ENCODE measurements at regions of chr21 and their contacts with region 1.

Region 1: GRCh38 chr21:15483138-15483780 is 246.5 kb upstream of the USP25 start:
- DNase-seq: peak; percentile 90
- ATAC-seq: peak; percentile 95
- H3K4me3 Mint-ChIP-seq: no peak overlapping the region
- H3K27ac Mint-ChIP-seq: no peak overlapping the region
- H3K4me1 Mint-ChIP-seq: peaks cover 21% of the 10 kb centered on the region
- H3K27me3 Mint-ChIP-seq: no peaks in the 10 kb centered on the region

Region 2: DNA sequence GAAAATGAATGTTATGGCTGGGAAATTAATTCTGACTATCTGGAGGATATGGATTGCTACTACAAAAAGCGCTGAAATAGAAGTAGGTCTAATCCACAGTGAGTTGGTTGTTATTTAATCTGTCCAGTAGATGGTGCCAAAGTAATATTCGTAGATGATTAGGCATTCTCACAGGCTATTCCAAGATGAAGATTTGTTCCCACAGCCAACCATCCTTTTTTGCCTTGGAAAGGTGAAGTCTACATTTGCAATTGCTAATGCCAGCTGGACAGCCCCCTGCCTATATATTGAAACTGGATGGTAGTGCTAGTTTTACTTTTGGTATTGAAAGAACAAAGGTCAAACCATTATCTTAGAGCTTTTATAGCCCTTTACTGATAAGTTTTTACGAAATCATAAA is 1223.5 kb before region 1 on chr21:
- CTCF ChIA-PET with region 1: interaction called, 4 read pairs
- POLR2A ChIA-PET with region 1: no interaction called
- intact Hi-C with region 1: loop called in 1 of 2 experiments (anchors 5 kb)
- DNase-seq: no peak
- ATAC-seq: peak; percentile 33
- H3K4me3 Mint-ChIP-seq: no peak overlapping the region
- H3K27ac Mint-ChIP-seq: no peak overlapping the region
- H3K4me1 Mint-ChIP-seq: peaks cover 5% of the 10 kb centered on the region
- H3K27me3 Mint-ChIP-seq: peaks cover 7% of the 10 kb centered on the region

Region 3: GRCh38 chr21:14438211-14438610 is 1045.0 kb before region 1 on chr21:
- CTCF ChIA-PET with region 1: no interaction called
- POLR2A ChIA-PET with region 1: no interaction called
- intact Hi-C with region 1: no loop called
- DNase-seq: no peak
- ATAC-seq: no peak
- H3K4me3 Mint-ChIP-seq: no peak overlapping the region
- H3K27ac Mint-ChIP-seq: no peak overlapping the region
- H3K4me1 Mint-ChIP-seq: no peaks in the 10 kb centered on the region
- H3K27me3 Mint-ChIP-seq: no peaks in the 10 kb centered on the region

Region 4: DNA sequence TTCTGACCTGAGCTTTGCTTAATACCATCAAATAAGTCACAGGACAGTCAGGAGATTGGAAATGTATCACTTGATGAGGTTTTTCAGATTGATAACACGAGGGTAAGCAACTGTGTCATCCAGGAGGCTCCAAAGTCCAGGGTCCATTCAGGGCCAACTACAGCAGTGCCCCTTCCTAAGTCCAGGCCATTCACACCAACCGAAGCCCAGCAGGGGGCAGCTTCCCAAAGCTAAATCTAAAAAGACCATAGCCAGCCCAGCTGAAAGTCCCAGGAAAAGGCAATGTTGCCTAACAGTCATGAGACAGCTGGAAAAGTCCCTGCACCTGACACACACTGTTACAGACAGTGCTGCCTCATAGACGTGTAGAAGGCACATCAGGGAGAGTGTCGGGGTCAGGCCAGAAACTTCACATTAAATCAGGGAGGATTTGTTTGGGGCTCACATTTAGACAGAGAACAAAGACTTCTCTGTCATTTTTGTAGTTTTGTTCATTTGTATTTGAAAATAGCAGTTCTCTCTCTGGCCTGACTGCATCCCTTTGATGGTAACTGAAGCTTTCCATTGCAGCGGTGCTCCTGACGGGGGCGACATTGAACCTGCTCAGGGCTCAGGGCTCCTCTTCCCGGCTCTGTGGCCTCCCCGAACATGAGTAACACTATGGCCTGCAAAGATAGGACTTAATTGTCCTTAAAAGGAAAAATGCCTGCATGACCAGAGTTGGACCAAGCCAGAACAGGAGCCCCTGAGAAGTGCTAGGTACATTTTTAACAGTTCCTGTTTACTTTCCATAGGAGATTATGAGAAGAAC is 618.8 kb before region 1 on chr21:
- CTCF ChIA-PET with region 1: interaction called, 5 read pairs
- POLR2A ChIA-PET with region 1: no interaction called
- intact Hi-C with region 1: loop called (anchors 1 kb)
- DNase-seq: peak; percentile 77
- ATAC-seq: peak; percentile 88
- H3K4me3 Mint-ChIP-seq: no peak overlapping the region
- H3K27ac Mint-ChIP-seq: no peak overlapping the region
- H3K4me1 Mint-ChIP-seq: peaks cover 6% of the 10 kb centered on the region
- H3K27me3 Mint-ChIP-seq: peaks cover 2% of the 10 kb centered on the region

Region 5: GRCh38 chr21:15400905-15401304 is 82.4 kb before region 1 on chr21:
- CTCF ChIA-PET with region 1: no interaction called
- POLR2A ChIA-PET with region 1: no interaction called
- intact Hi-C with region 1: no loop called
- DNase-seq: no peak
- ATAC-seq: no peak
- H3K4me3 Mint-ChIP-seq: no peak overlapping the region
- H3K27ac Mint-ChIP-seq: no peak overlapping the region
- H3K4me1 Mint-ChIP-seq: no peaks in the 10 kb centered on the region
- H3K27me3 Mint-ChIP-seq: no peaks in the 10 kb centered on the region

Region 6: DNA sequence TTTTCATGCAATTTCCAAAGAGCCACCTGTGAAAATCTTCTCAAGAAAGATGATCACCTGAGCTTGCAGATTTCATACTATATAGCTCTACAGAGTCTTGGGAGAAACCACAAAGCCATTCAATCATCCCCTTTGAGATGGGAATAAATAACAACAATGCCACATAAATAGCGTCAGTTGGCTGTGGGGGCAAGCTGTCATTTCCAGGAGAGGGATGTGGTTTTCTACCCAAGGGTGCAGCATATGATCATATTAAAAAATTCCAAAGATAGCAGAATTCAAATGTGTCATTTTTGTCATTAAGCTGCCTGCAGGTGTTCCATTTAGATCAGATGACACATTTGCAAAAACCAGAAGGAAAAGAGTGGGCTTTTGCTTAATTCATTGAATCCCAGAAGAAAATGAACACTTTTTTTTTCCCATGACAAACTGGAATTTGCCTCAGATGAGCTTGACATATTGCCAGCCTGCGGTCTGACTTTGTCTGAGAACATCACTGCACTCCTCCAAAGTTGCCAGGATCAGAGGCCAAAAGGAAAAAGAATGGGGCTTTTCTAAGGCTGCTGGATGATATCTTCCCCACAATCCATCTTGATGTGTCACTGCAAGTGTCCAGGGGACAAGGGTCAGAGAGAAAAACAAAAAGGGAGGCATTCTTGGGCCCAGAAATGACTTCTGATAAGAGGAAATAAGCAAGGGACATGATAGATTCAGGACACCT is 67.6 kb before region 1 on chr21:
- CTCF ChIA-PET with region 1: interaction called, 3 read pairs
- POLR2A ChIA-PET with region 1: no interaction called
- intact Hi-C with region 1: loop called in 1 of 2 experiments (anchors 5 kb)
- DNase-seq: no peak
- ATAC-seq: no peak
- H3K4me3 Mint-ChIP-seq: no peak overlapping the region
- H3K27ac Mint-ChIP-seq: no peak overlapping the region
- H3K4me1 Mint-ChIP-seq: peaks cover 3% of the 10 kb centered on the region
- H3K27me3 Mint-ChIP-seq: no peaks in the 10 kb centered on the region

Region 7: DNA sequence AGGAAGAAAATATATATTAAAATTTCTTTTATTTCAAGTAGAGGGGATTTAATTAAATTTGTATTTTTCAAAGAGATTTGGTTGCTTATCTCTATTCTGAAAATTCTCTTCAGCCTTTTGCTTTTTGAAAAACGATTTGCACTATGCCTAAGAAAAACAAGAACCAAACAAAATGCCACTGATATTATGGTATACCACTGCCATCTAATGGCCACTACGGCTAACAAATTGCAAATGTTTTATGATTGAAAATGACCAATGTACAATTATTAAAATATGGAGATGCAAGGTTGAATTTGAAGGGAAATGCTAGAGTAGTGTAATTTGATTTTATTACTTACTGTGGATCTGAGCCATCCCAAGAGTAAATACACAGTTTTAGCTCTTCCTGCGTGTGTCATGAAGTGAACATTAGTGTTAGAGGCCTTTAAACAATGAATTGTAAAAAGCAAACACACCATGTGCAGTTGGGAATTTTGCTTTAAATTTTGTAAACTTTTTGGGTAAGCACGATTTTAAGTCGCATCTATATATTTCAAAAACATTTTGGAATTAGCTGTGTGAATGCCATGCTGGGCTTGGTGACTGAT is 109.1 kb after region 1 on chr21:
- CTCF ChIA-PET with region 1: interaction called, 7 read pairs
- POLR2A ChIA-PET with region 1: interaction called, 7 read pairs
- intact Hi-C with region 1: loop called in 1 of 2 experiments (anchors 2 kb)
- DNase-seq: no peak
- ATAC-seq: no peak
- H3K4me3 Mint-ChIP-seq: no peak overlapping the region
- H3K27ac Mint-ChIP-seq: no peak overlapping the region
- H3K4me1 Mint-ChIP-seq: no peaks in the 10 kb centered on the region
- H3K27me3 Mint-ChIP-seq: peaks cover 8% of the 10 kb centered on the region

Region 8: GRCh38 chr21:16046625-16047340 is 563.5 kb after region 1 on chr21:
- CTCF ChIA-PET with region 1: no interaction called
- POLR2A ChIA-PET with region 1: no interaction called
- intact Hi-C with region 1: no loop called
- DNase-seq: no peak
- ATAC-seq: no peak
- H3K4me3 Mint-ChIP-seq: no peak overlapping the region
- H3K27ac Mint-ChIP-seq: no peak overlapping the region
- H3K4me1 Mint-ChIP-seq: no peaks in the 10 kb centered on the region
- H3K27me3 Mint-ChIP-seq: no peaks in the 10 kb centered on the region

Measured in activated CD4-positive, alpha-beta T cell treated with anti-CD3 and anti-CD28 coated beads for 36 hours (primary cell).